Gastrocnemius medialis (tissue), 4 donors: ENCODE measurements at regions of chr17 and their contacts with region 1.

Region 1: GRCh38 chr17:6069539-6070429 is at the start of gene WSCD1:
- DNase-seq: no peak
- ATAC-seq: peak; percentile 51 to 55
- H3K4me3 ChIP-seq: peak within 1 kb of the TSS; percentile 52 to 62 (median 60)
- H3K27ac ChIP-seq: peak within 1 kb of the TSS; percentile 6 to 65 (median 48)
- H3K4me1 ChIP-seq: peaks cover 15 to 19% of the 10 kb centered on the region in 2 donors
- H3K27me3 ChIP-seq: peaks cover 0 to 1% (median 0%) of the 10 kb centered on the region in 3 donors
- CTCF ChIP-seq: no peak
- POLR2A ChIP-seq: no peak
- total RNA-seq, gene WSCD1: 2.7 to 15.3 (median 5.9) TPM

Region 2: DNA sequence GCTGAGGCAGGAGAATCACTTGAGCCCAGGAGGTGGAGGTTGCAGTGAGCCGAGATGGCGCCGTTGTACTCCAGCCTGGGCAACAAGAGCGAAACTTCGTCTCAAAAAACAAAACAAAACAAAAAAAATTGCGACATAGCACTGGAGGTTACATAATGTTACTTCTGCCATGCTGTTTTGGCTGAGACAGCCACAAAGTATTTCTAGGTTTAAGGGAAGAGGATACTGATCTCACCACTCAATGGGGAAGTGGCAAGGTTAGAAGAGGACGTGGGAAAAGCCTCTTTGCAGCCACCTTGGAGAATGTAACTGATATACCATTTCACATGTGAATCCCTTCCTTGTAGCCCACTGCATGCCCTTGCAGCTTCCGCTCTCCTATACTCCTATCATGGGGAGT is 354.3 kb before region 1 on chr17:
- in situ Hi-C with region 1: no loop called
- intact Hi-C with region 1: loop called (anchors 2 kb)
- DNase-seq: no peak
- ATAC-seq: no peak
- H3K4me3 ChIP-seq: no peak overlapping the region
- H3K27ac ChIP-seq: no peak overlapping the region
- H3K4me1 ChIP-seq: peaks cover 5 to 16% of the 10 kb centered on the region in 2 donors
- H3K27me3 ChIP-seq: peaks cover 4 to 54% (median 8%) of the 10 kb centered on the region in 3 donors
- CTCF ChIP-seq: no peak
- POLR2A ChIP-seq: no peak

Region 3: GRCh38 chr17:6084311-6085161 is 14.8 kb after region 1 on chr17:
- in situ Hi-C with region 1: no loop called
- intact Hi-C with region 1: loop called (anchors 2 kb)
- DNase-seq: peak; percentile 76 to 91
- ATAC-seq: peak; percentile 88 to 92
- H3K4me3 ChIP-seq: no peak overlapping the region
- H3K27ac ChIP-seq: peak overlapping the region; percentile 64 to 75 (median 73)
- H3K4me1 ChIP-seq: peaks cover 40 to 44% of the 10 kb centered on the region in 2 donors
- H3K27me3 ChIP-seq: no peaks in the 10 kb centered on the region
- CTCF ChIP-seq: no peak
- POLR2A ChIP-seq: peak in 1 of 2 donors; percentile 20

Region 4: GRCh38 chr17:6098050-6098822 is 28.5 kb after region 1 on chr17:
- in situ Hi-C with region 1: no loop called
- intact Hi-C with region 1: loop called (anchors 2 kb)
- DNase-seq: peak; percentile 61 to 73
- ATAC-seq: peak; percentile 92 to 96
- H3K4me3 ChIP-seq: no peak overlapping the region
- H3K27ac ChIP-seq: peak overlapping the region; percentile 69 to 79 (median 78)
- H3K4me1 ChIP-seq: peaks cover 32 to 52% of the 10 kb centered on the region in 2 donors
- H3K27me3 ChIP-seq: no peaks in the 10 kb centered on the region
- CTCF ChIP-seq: no peak
- POLR2A ChIP-seq: no peak

Region 5: DNA sequence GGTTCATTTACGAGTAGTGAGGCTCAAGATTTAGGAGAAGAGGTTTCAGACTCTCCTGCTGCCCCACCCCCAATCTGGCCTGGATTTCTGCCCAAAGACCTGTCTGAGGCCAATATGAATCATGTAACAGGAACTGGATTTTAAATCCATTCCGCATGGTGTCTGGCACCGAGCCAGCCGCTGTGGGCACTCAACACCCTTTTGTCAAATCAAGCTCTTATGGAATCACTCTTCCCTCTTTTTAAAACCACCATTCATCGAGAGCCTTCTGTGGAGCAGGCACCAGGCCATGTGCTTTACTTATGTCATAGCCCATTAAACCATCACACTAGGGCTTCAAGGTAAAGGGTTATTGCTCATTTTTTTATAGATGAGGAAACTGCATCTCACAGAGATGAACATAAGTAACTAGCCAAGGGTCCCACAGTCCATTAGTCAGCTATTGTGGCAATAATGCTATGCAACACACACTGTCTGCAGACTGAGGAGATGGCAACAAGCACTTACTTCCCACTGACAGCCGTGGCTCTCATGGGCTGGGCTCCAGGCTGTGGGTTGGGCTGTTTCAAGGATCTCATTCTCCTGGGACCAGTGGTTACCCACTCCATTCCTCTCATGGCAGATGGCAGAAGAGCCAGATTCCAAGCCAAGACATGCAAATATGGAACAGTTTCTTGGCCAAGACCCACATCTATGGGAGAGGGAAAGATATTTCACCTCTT is 94.0 kb after region 1 on chr17:
- in situ Hi-C with region 1: loop called in 1 of 4 experiments (anchors 25 kb)
- intact Hi-C with region 1: no loop called
- DNase-seq: no peak
- ATAC-seq: no peak
- H3K4me3 ChIP-seq: no peak overlapping the region
- H3K27ac ChIP-seq: no peak overlapping the region
- H3K4me1 ChIP-seq: peaks cover 0 to 9% of the 10 kb centered on the region in 2 donors
- H3K27me3 ChIP-seq: no peaks in the 10 kb centered on the region
- CTCF ChIP-seq: no peak
- POLR2A ChIP-seq: no peak

Region 6: GRCh38 chr17:6421700-6422604 is 352.2 kb after region 1 on chr17:
- in situ Hi-C with region 1: loop called in 1 of 4 experiments (anchors 25 kb)
- intact Hi-C with region 1: no loop called
- DNase-seq: peak; percentile 27 to 55
- ATAC-seq: peak; percentile 39 to 79
- H3K4me3 ChIP-seq: no peak overlapping the region
- H3K27ac ChIP-seq: no peak overlapping the region
- H3K4me1 ChIP-seq: no peaks in the 10 kb centered on the region
- H3K27me3 ChIP-seq: no peaks in the 10 kb centered on the region
- CTCF ChIP-seq: peak; percentile 75 to 87 (median 85)
- POLR2A ChIP-seq: no peak